Ovary (tissue), 10 donors: ENCODE measurements at regions of chr3 and their contacts with region 1.

Region 1: DNA sequence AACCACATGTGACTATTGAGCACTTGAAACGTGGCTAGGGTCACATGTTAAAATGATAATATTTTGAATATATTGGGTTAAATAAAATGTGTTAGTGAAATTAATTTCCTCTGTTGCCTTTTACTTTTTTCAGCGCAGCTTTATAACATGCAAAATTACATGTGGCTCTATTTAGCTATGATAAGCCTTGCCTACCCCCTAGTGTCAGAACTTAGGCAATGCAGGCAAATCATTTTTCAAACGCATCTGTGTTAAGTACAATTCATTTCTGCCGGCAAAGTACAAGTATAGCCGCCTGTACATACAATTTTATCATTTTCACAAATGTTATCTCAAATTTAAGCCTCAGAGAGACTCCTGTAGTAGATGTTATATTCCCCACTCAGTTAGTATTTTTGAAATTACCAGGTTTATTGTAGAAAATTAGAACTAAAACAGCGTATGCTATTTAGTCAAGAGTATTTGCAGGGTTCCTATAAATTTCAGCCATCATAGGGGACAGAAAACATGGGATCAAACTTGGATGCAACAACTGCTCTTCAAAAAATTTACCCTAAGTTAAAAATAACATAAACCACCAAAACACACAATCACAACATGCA is 56.1 kb downstream of the TAFA4 start:
- DNase-seq: peak in 1 of 5 donors; percentile 27
- H3K4me3 ChIP-seq: no peak overlapping the region
- H3K27ac ChIP-seq: no peak overlapping the region
- H3K4me1 ChIP-seq: no peaks in the 10 kb centered on the region
- H3K27me3 ChIP-seq: no peaks in the 10 kb centered on the region
- CTCF ChIP-seq: peak; percentile 49 to 73 (median 52)
- EP300 ChIP-seq: no peak
- POLR2A ChIP-seq: no peak

Region 2: GRCh38 chr3:66971891-66972551 is 1904.2 kb before region 1 on chr3:
- intact Hi-C with region 1: loop called in 2 of 4 experiments (anchors 10 kb)
- DNase-seq: peak; percentile 64 to 76 (median 72)
- H3K4me3 ChIP-seq: peak overlapping the region; percentile 13
- H3K27ac ChIP-seq: peak overlapping the region in 1 of 2 donors; percentile 24
- H3K4me1 ChIP-seq: no peaks in the 10 kb centered on the region
- H3K27me3 ChIP-seq: no peaks in the 10 kb centered on the region
- CTCF ChIP-seq: peak; percentile 48 to 80 (median 52)
- EP300 ChIP-seq: no peak
- POLR2A ChIP-seq: no peak

Region 3: GRCh38 chr3:67113802-67114407 is 1762.3 kb before region 1 on chr3:
- intact Hi-C with region 1: loop called in 1 of 4 experiments (anchors 10 kb)
- DNase-seq: peak; percentile 29 to 74 (median 50)
- H3K4me3 ChIP-seq: no peak overlapping the region
- H3K27ac ChIP-seq: no peak overlapping the region
- H3K4me1 ChIP-seq: no peaks in the 10 kb centered on the region
- H3K27me3 ChIP-seq: no peaks in the 10 kb centered on the region
- CTCF ChIP-seq: peak in 1 of 3 donors; percentile 9
- EP300 ChIP-seq: no peak
- POLR2A ChIP-seq: no peak